ENCODE measurements at regions of chr11 and their contacts with region 1.

Region 1: GRCh38 chr11:118491041-118491440 is 36.2 kb upstream of the TTC36 start:
- DNase-seq: no peak
- H3K4me3 ChIP-seq: no peak overlapping the region
- H3K27ac ChIP-seq: no peak overlapping the region
- H3K4me1 ChIP-seq: peaks cover 13% of the 10 kb centered on the region
- H3K27me3 ChIP-seq: no peaks in the 10 kb centered on the region
- CTCF ChIP-seq: no peak

Region 2: DNA sequence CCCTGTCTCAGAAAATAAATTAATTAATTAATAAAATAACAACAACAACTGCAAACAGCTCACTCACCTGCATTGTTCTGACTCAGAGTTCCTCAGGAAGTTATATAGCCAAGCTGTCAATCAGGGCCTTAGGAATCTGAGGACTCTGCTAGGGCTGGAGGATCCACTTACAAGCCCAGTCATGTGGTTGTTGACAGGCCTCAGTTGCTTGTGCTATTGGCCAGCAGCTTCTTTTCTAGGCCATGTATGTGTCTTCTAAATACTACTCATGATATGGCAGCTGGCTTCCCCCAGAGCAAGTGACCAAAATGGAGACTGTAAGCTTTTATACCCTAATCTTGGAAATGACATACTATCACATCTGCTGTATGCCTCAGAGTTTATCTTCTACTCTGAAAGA is 110.5 kb before region 1 on chr11:
- intact Hi-C with region 1: loop called (anchors 5 kb)
- DNase-seq: no peak
- H3K4me3 ChIP-seq: no peak overlapping the region
- H3K27ac ChIP-seq: peak overlapping the region; percentile 30
- H3K4me1 ChIP-seq: peaks cover 7% of the 10 kb centered on the region
- H3K27me3 ChIP-seq: no peaks in the 10 kb centered on the region
- CTCF ChIP-seq: no peak